ENCODE measurements at regions of chr12 and their contacts with region 1.

Region 1: GRCh38 chr12:69879041-69879960 is 54.3 kb downstream of the MYRFL start:
- DNase-seq: no peak
- ATAC-seq: peak; percentile 98
- H3K4me3 ChIP-seq: no peak overlapping the region
- H3K27ac ChIP-seq: no peak overlapping the region
- H3K4me1 ChIP-seq: no peaks in the 10 kb centered on the region
- H3K27me3 ChIP-seq: no peaks in the 10 kb centered on the region
- CTCF ChIP-seq: peak; percentile 80 to 87 (median 86)
- EP300 ChIP-seq: no peak
- POLR2A ChIP-seq: no peak
- RAD21 ChIP-seq: peak; percentile 94

Region 2: DNA sequence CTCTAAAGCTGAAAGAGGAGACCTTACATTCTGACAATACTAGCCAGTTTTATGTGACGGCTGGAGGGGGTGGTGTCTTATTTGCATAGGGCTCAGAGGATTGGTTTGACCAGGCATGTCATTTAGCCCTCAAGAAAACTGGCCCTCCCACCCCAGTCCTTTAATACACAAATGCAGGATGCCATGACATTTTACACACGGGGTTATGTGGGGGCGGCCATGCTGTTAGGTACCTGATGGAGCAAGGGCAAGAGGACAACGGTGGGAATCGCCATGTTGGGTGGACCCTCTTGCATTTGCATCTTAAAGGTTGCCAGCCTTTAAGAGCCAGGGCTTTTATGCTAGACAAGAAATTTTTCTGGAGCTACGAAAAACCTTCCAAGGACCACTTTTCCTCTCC is 1048.0 kb before region 1 on chr12:
- CTCF ChIA-PET with region 1: no interaction called
- POLR2A ChIA-PET with region 1: no interaction called
- RAD21 ChIA-PET with region 1: no interaction called
- SMC1A ChIA-PET with region 1: no interaction called
- in situ Hi-C with region 1: no loop called
- intact Hi-C with region 1: no loop called
- DNase-seq: no peak
- ATAC-seq: peak; percentile 7; the same call in 2 of the 3 replicates
- H3K4me3 ChIP-seq: no peak overlapping the region
- H3K27ac ChIP-seq: no peak overlapping the region
- H3K4me1 ChIP-seq: no peaks in the 10 kb centered on the region
- H3K27me3 ChIP-seq: no peaks in the 10 kb centered on the region
- CTCF ChIP-seq: no peak
- EP300 ChIP-seq: no peak
- POLR2A ChIP-seq: peak; percentile 63
- RAD21 ChIP-seq: no peak

Region 3: GRCh38 chr12:69354556-69355187 is 524.6 kb before region 1 on chr12:
- CTCF ChIA-PET with region 1: no interaction called
- POLR2A ChIA-PET with region 1: no interaction called
- RAD21 ChIA-PET with region 1: no interaction called
- SMC1A ChIA-PET with region 1: no interaction called
- in situ Hi-C with region 1: no loop called
- intact Hi-C with region 1: loop called (anchors 2 kb)
- DNase-seq: no peak
- ATAC-seq: no peak
- H3K4me3 ChIP-seq: no peak overlapping the region
- H3K27ac ChIP-seq: no peak overlapping the region
- H3K4me1 ChIP-seq: no peaks in the 10 kb centered on the region; the same call in 1 of the 2 replicates
- H3K27me3 ChIP-seq: no peaks in the 10 kb centered on the region
- CTCF ChIP-seq: no peak
- EP300 ChIP-seq: no peak
- POLR2A ChIP-seq: no peak
- RAD21 ChIP-seq: no peak

Region 4: GRCh38 chr12:69464428-69464827 is 414.9 kb before region 1 on chr12:
- CTCF ChIA-PET with region 1: no interaction called
- POLR2A ChIA-PET with region 1: no interaction called
- RAD21 ChIA-PET with region 1: no interaction called
- SMC1A ChIA-PET with region 1: no interaction called
- in situ Hi-C with region 1: no loop called
- intact Hi-C with region 1: no loop called
- DNase-seq: no peak
- ATAC-seq: peak; percentile 38; the same call in 1 of the 3 replicates
- H3K4me3 ChIP-seq: no peak overlapping the region
- H3K27ac ChIP-seq: no peak overlapping the region
- H3K4me1 ChIP-seq: peaks cover 8% of the 10 kb centered on the region; the same call in 1 of the 2 replicates
- H3K27me3 ChIP-seq: no peaks in the 10 kb centered on the region
- CTCF ChIP-seq: no peak
- EP300 ChIP-seq: no peak
- POLR2A ChIP-seq: no peak
- RAD21 ChIP-seq: no peak

Region 5: DNA sequence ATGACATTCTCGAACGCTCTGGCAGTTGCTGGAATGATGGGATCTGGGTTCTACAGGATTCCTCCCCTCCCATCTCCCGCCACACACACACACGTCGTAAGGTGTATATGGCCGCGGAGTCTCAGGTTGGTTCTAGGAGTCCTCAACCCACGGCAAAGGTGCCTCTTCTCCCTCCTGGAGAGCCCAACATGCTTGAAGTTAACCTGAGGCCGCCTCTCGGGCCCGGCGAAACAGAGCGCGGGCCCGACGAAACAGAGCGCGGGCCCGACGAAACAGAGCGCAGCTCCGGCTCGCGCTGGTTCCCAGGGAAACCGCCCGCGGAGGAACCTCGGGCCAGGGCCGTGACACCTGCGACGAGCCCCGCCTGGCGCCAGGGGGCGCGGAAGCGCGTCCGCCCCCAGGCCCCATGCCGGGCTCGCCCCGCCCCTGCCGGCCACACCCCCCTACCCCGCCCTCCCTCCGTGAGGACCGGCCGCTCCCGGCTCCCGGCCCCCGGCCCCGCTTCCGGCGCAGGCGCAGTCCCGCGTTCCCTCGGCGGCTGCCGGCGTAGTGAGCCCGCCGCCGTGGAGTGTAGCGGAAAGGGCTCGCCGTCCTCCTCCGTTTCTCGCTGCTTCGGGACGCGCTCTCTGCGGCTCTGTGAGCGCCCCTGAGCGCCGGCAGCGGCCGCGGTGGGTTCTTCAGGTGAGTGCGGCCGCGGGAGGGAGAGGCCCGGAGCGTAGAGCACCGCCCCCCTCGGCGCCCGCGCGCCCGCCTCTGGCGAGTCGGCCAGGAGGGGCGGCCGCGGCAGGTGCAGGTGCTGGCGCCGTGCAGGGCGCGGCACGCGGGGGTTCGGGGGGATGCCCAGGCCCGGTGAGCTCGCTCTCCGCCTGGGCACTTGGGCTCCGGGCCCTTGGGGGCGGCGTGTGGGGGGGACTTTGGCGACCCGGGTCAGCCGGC is 140.7 kb before region 1 on chr12 and contains the start of gene RAB3IP:
- CTCF ChIA-PET with region 1: interaction called, 3 read pairs
- POLR2A ChIA-PET with region 1: no interaction called
- RAD21 ChIA-PET with region 1: no interaction called
- SMC1A ChIA-PET with region 1: no interaction called
- in situ Hi-C with region 1: no loop called
- intact Hi-C with region 1: loop called (anchors 5 kb)
- DNase-seq: peak; percentile 51
- ATAC-seq: peak; percentile 88
- H3K4me3 ChIP-seq: peak within 1 kb of the TSS; percentile 77
- H3K27ac ChIP-seq: peak within 1 kb of the TSS; percentile 74
- H3K4me1 ChIP-seq: peaks cover 3% of the 10 kb centered on the region; the same call in 1 of the 2 replicates
- H3K27me3 ChIP-seq: no peaks in the 10 kb centered on the region
- CTCF ChIP-seq: peak; percentile 52 to 81 (median 64); a peak in 5 of 6 replicates
- EP300 ChIP-seq: peak in 1 of 2 experiments; percentile 1; a peak in 1 of 4 replicates
- POLR2A ChIP-seq: peak; percentile 69
- RAD21 ChIP-seq: no peak
- polyA plus RNA-seq, gene RAB3IP: 22.4 to 30.9 TPM

Region 6: GRCh38 chr12:69900720-69901131 is 21.4 kb after region 1 on chr12:
- CTCF ChIA-PET with region 1: interaction called, 38 read pairs
- POLR2A ChIA-PET with region 1: no interaction called
- RAD21 ChIA-PET with region 1: interaction called, 7 read pairs
- SMC1A ChIA-PET with region 1: interaction called, 11 read pairs
- in situ Hi-C with region 1: no loop called
- intact Hi-C with region 1: no loop called
- DNase-seq: no peak
- ATAC-seq: peak; percentile 88
- H3K4me3 ChIP-seq: no peak overlapping the region
- H3K27ac ChIP-seq: no peak overlapping the region
- H3K4me1 ChIP-seq: no peaks in the 10 kb centered on the region
- H3K27me3 ChIP-seq: no peaks in the 10 kb centered on the region
- CTCF ChIP-seq: peak; percentile 58 to 74 (median 66)
- EP300 ChIP-seq: no peak
- POLR2A ChIP-seq: no peak
- RAD21 ChIP-seq: peak; percentile 88

Region 7: DNA sequence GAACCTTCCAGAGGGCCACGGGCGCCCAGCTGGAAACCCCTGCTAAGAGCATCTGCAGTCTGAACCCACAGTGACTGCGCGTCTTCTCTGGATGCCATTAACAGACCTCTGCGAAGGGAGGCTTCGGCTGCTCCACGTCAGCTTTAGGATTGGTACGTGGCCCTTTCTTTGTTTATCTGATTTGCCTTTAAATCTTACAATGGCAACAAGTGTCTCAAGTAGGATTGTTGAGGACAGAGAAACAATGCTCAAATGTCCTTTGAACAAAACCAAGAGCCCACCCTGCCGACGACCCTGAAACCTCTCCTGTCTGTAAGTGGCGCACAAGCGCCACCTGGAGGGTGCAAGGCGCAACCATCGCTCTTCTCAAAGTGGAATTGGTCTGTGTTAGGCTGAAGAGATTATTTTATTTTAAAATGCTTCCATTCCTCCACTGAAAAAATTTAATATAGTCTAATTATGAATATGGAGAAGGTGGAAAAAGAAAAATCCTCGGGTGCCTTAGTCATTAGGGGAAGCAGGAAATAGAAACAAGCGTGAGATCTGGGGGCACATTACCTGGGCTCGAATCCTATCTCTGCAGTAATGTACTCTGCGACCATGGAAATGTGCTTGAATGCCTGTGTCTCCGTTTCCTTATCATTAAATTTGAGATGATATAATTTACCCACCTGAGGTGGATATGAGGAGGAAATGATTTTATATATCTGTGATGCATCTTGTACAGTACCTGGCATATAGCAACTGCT is 840.5 kb after region 1 on chr12:
- CTCF ChIA-PET with region 1: interaction called, 4 read pairs
- POLR2A ChIA-PET with region 1: no interaction called
- RAD21 ChIA-PET with region 1: no interaction called
- SMC1A ChIA-PET with region 1: no interaction called
- in situ Hi-C with region 1: loop called (anchors 5 kb)
- intact Hi-C with region 1: loop called (anchors 2 kb)
- DNase-seq: no peak
- ATAC-seq: peak; percentile 75
- H3K4me3 ChIP-seq: no peak overlapping the region
- H3K27ac ChIP-seq: no peak overlapping the region
- H3K4me1 ChIP-seq: no peaks in the 10 kb centered on the region
- H3K27me3 ChIP-seq: no peaks in the 10 kb centered on the region; a peak in 1 of 4 replicates
- CTCF ChIP-seq: peak; percentile 72 to 88 (median 75)
- EP300 ChIP-seq: no peak
- POLR2A ChIP-seq: no peak
- RAD21 ChIP-seq: peak; percentile 80

Region 8: DNA sequence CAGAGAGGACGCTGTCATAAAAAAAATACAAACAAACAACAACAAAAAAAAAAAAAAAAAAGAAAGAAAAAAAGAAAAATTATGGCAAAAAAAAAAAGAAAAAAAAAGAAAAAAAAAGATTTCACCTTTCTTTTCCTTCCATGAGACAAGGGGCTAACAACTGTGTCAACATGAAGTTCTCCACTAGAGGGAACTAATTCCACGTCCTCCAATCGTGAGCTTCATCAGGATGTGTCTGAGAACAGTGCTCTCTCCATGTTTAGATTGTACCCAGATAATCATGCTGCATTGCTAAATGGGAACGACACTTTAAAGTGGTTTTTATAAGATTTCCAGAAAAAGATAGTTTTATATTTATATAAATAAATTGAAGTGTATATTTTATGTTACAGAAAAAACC is 854.1 kb after region 1 on chr12:
- CTCF ChIA-PET with region 1: interaction called, 14 read pairs
- POLR2A ChIA-PET with region 1: no interaction called
- RAD21 ChIA-PET with region 1: interaction called, 3 read pairs
- SMC1A ChIA-PET with region 1: interaction called, 13 read pairs
- in situ Hi-C with region 1: loop called (anchors 5 kb)
- intact Hi-C with region 1: loop called (anchors 2 kb)
- DNase-seq: peak; percentile 5
- ATAC-seq: peak; percentile 91
- H3K4me3 ChIP-seq: no peak overlapping the region
- H3K27ac ChIP-seq: no peak overlapping the region
- H3K4me1 ChIP-seq: no peaks in the 10 kb centered on the region
- H3K27me3 ChIP-seq: no peaks in the 10 kb centered on the region
- CTCF ChIP-seq: peak; percentile 58 to 67 (median 63)
- EP300 ChIP-seq: no peak
- POLR2A ChIP-seq: no peak
- RAD21 ChIP-seq: peak; percentile 77

Measured in GM12878 (cell line).